Activated CD4-positive, alpha-beta T cell treated with anti-CD3 and anti-CD28 coated beads, Interleukin-2, amount 10 ng/mL, durations not matched to agents 7 days and 5 days (primary cell): ENCODE measurements at regions of chr3 and their contacts with region 1.

Region 1: DNA sequence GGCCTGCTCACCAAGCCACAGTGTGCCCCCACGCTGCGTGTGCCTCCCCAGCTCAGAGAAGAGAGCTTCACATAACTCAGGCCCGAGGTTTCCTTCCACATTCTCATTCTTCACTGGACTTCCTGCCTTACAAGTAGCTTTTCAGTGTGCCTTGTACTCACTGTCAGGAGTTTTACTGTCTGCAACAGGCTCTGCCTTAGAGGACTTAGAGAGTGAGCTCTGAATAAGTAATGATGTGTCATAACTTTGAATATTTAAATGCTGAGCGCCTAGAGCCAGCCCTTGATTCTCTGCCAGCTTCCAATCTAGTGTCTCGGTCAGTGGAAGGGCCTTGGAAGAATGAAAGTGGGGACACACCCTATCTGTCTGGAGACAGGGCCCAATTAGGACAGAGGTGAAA is 41.8 kb downstream of the ITGB5 start:
- DNase-seq: no peak
- H3K4me3 Mint-ChIP-seq: no peak overlapping the region
- H3K27ac Mint-ChIP-seq: no peak overlapping the region
- H3K4me1 Mint-ChIP-seq: no peaks in the 10 kb centered on the region
- H3K27me3 Mint-ChIP-seq: no peaks in the 10 kb centered on the region

Region 2: DNA sequence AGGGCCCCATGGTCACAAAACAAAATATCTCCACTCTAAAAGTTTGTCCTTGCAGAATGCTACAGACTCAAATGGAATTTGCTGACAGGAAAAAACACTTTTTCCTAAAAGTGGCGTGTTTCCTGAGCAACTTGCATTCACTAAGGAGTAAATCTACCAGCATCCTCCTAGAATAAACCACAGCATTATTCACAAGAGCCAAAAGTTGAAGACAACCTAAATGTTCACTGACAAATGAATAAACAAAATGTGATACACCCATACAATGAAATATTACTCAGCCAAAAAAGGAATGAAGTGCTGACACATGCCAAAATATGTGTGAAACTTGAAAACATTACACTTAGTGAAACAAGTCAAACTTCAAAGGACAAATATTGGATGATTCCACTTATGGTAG is 12.9 kb after region 1 on chr3:
- CTCF ChIA-PET with region 1: interaction called, 12 read pairs
- POLR2A ChIA-PET with region 1: no interaction called
- DNase-seq: no peak
- H3K4me3 Mint-ChIP-seq: no peak overlapping the region
- H3K27ac Mint-ChIP-seq: no peak overlapping the region
- H3K4me1 Mint-ChIP-seq: no peaks in the 10 kb centered on the region
- H3K27me3 Mint-ChIP-seq: peaks cover 15% of the 10 kb centered on the region

Region 3: DNA sequence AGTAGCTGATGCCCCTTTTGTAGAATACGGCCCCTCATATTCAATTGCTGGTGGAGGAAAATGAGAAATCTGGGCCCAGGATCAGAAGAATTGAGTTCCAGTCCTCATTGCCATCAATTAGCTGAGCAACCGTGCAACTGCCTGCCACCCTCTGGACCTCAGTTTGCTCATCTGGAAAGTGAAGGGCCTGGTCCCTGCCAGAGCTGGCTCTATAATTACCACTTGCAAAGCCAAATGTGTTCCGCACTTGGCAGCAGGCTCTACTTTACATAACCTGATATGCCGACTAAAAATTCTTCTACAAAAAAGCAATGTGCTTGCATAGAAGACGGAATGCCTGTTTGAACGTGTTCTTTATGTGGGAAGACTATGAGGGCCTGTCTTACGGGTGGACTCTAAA is 50.4 kb after region 1 on chr3:
- CTCF ChIA-PET with region 1: no interaction called
- POLR2A ChIA-PET with region 1: no interaction called
- DNase-seq: no peak
- H3K4me3 Mint-ChIP-seq: no peak overlapping the region
- H3K27ac Mint-ChIP-seq: no peak overlapping the region
- H3K4me1 Mint-ChIP-seq: peaks cover under 1% of the 10 kb centered on the region
- H3K27me3 Mint-ChIP-seq: peaks cover 2% of the 10 kb centered on the region

Region 4: DNA sequence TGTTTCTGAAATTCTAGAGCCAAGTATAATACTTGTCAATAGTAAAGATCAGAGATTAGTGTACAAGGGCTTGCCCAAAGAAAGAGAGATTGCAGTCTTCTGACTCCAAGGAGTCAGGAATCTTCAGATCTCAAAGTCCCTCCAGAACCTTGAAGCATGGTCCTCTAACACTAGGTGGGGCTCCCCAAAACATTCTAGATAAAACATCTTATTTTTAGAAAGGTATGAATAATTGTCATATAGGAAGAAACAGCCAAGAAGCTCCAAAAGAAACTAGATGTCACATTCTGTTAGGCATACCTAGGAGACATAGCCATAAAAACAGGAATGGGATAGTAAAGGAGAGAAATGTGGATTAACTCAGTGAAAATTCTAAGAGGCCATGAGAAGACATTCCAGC is 78.4 kb after region 1 on chr3:
- CTCF ChIA-PET with region 1: no interaction called
- POLR2A ChIA-PET with region 1: no interaction called
- DNase-seq: no peak
- H3K4me3 Mint-ChIP-seq: no peak overlapping the region
- H3K27ac Mint-ChIP-seq: no peak overlapping the region
- H3K4me1 Mint-ChIP-seq: peaks cover 4% of the 10 kb centered on the region
- H3K27me3 Mint-ChIP-seq: peaks cover 30% of the 10 kb centered on the region